ENCODE measurements at regions of chr2 and their contacts with region 1.

Region 1: DNA sequence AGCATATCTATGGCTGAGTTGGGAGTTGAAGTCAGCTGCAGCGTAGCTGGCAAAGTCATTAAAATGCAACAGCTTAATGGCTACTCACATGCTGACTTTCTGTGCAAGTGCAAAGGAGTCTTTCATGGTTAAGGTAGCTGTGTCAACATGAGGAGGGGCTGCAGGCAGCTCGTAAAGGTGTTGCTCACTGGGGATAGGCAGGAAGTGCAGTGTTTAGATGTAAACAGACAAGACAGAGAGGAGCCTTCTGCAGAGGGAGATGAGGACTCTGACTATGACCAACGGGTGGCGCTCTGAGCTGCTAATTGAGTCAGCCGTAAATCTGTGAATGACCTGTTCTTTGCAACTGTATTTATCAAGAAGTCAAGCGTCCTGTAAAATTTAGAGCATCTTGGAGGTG is 22.3 kb upstream of the CAVIN2 start:
- DNase-seq: peak; percentile 82
- ATAC-seq: peak; percentile 99
- H3K4me3 Mint-ChIP-seq: no peak overlapping the region
- H3K27ac Mint-ChIP-seq: peak overlapping the region; percentile 48; the same call in 1 of the 2 replicates
- H3K4me1 Mint-ChIP-seq: peaks cover 31% of the 10 kb centered on the region
- H3K27me3 Mint-ChIP-seq: peaks cover 3% of the 10 kb centered on the region; the same call in 1 of the 2 replicates
- CTCF ChIP-seq: peak; percentile 56

Region 2: GRCh38 chr2:191811807-191812602 is 57.2 kb before region 1 on chr2:
- CTCF ChIA-PET with region 1: interaction called, 44 read pairs
- POLR2A ChIA-PET with region 1: no interaction called
- DNase-seq: peak; percentile 59
- ATAC-seq: peak; percentile 84
- H3K4me3 Mint-ChIP-seq: no peak overlapping the region
- H3K27ac Mint-ChIP-seq: no peak overlapping the region
- H3K4me1 Mint-ChIP-seq: 0 out of 2 replicates have a peak, but pooled peaks cover 2% of the 10 kb centered on the region
- H3K27me3 Mint-ChIP-seq: no peaks in the 10 kb centered on the region; the same call in 1 of the 2 replicates
- CTCF ChIP-seq: peak; percentile 36

Region 3: GRCh38 chr2:191835539-191836350 is 33.4 kb before region 1 on chr2:
- CTCF ChIA-PET with region 1: interaction called, 12 read pairs
- POLR2A ChIA-PET with region 1: no interaction called
- DNase-seq: peak; percentile 58
- ATAC-seq: peak; percentile 90
- H3K4me3 Mint-ChIP-seq: no peak overlapping the region
- H3K27ac Mint-ChIP-seq: no peak overlapping the region
- H3K4me1 Mint-ChIP-seq: peaks cover 24% of the 10 kb centered on the region
- H3K27me3 Mint-ChIP-seq: no peaks in the 10 kb centered on the region
- CTCF ChIP-seq: no peak

Region 4: GRCh38 chr2:191885098-191885497 is 15.9 kb after region 1 on chr2:
- CTCF ChIA-PET with region 1: no interaction called
- POLR2A ChIA-PET with region 1: no interaction called
- DNase-seq: no peak
- ATAC-seq: no peak
- H3K4me3 Mint-ChIP-seq: no peak overlapping the region
- H3K27ac Mint-ChIP-seq: no peak overlapping the region
- H3K4me1 Mint-ChIP-seq: no peaks in the 10 kb centered on the region
- H3K27me3 Mint-ChIP-seq: no peaks in the 10 kb centered on the region
- CTCF ChIP-seq: no peak

Region 5: GRCh38 chr2:192029089-192029488 is 159.9 kb after region 1 on chr2:
- CTCF ChIA-PET with region 1: interaction called, 12 read pairs
- POLR2A ChIA-PET with region 1: no interaction called
- DNase-seq: peak; percentile 67
- ATAC-seq: peak; percentile 92
- H3K4me3 Mint-ChIP-seq: no peak overlapping the region
- H3K27ac Mint-ChIP-seq: no peak overlapping the region
- H3K4me1 Mint-ChIP-seq: peaks cover 39% of the 10 kb centered on the region
- H3K27me3 Mint-ChIP-seq: no peaks in the 10 kb centered on the region
- CTCF ChIP-seq: peak; percentile 41; the same call in 1 of the 2 replicates

Region 6: DNA sequence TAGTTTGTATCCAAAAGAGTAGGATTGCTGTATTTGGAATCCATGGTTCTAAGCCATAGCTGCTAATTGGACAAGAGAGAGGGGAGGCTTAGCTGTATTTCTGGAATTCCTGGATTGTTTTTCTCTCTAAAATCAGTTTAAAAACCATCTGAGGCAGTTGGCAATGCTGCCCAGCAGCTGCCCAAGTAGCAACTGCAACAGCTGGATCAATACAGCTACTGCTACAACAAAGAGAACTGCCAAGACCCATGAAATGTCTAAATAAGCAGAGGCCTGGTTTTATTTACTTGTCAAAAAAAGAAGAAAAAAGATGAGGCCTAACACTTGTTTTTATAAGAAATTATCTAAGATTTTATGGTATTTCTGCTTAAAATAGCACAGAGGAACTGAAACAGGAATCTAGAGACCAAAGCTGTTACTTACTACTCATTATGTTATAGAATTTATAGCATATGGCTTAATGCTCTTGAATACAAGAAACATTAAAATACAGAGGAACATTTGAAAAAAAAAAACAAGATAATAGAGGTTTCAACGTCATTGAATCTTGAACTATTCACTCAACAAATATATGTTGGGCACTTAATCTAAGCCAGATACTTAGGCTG is 286.4 kb after region 1 on chr2:
- CTCF ChIA-PET with region 1: interaction called, 18 read pairs
- POLR2A ChIA-PET with region 1: no interaction called
- DNase-seq: no peak
- ATAC-seq: no peak
- H3K4me3 Mint-ChIP-seq: no peak overlapping the region
- H3K27ac Mint-ChIP-seq: no peak overlapping the region
- H3K4me1 Mint-ChIP-seq: peaks cover 11% of the 10 kb centered on the region
- H3K27me3 Mint-ChIP-seq: no peaks in the 10 kb centered on the region; the same call in 1 of the 2 replicates
- CTCF ChIP-seq: no peak

Region 7: GRCh38 chr2:192194866-192195547 is 325.8 kb after region 1 on chr2 and contains the start of gene TMEFF2:
- CTCF ChIA-PET with region 1: interaction called, 26 read pairs
- POLR2A ChIA-PET with region 1: no interaction called
- DNase-seq: peak; percentile 92
- ATAC-seq: peak; percentile 84
- H3K4me3 Mint-ChIP-seq: peak within 1 kb of the TSS; percentile 85
- H3K27ac Mint-ChIP-seq: no peak within 1 kb of the TSS
- H3K4me1 Mint-ChIP-seq: peaks cover 26% of the 10 kb centered on the region
- H3K27me3 Mint-ChIP-seq: peaks cover 72% of the 10 kb centered on the region
- CTCF ChIP-seq: peak; percentile 38; the same call in 1 of the 2 replicates
- total RNA-seq, gene TMEFF2: 0.87 to 2.4 TPM (median 2.3 TPM) in 3 replicates

Measured in WTC11 (cell line).